ENCODE measurements at regions of chr3 and their contacts with region 1.

Region 1: DNA sequence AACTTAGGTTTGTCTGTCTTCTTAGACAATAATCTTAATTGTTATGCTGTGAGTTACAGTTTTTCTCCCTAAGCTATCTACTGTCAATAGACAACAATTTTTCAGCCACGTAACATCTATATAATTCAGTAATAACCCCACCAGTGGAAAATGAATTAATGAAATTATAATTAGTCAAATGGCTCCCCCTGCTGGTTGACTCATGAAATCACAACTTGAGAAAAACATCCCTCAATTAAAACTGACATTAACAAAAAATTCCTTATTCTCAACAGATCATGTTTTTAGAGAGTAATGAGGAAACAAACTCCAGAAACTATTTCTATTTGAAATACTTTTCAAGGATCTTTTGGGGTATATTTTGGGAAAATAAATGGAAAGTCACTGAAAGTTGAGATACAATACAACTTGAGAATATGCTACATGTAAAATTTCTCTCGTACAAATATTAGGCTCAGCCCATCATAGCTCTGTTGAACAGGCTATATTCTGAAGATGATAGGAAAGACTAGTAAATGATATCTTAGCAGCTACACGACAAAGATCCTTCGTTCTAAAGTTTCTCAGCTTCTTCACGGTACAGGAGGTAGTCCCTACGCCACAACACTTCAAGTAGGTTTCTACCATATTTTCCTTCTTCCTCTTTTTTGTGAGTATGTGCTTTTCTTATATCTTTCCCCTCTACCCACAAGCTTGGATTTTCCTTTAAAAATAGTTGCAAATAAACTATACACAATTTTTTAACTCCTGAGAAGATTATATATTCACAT is 20.7 kb downstream of the PPP1R2 start:
- DNase-seq: no peak
- ATAC-seq: no peak
- H3K4me3 ChIP-seq: no peak overlapping the region
- H3K27ac ChIP-seq: no peak overlapping the region
- H3K4me1 ChIP-seq: no peaks in the 10 kb centered on the region
- H3K27me3 ChIP-seq: no peaks in the 10 kb centered on the region
- CTCF ChIP-seq: peak; percentile 60
- EP300 ChIP-seq: no peak
- POLR2A ChIP-seq: no peak
- RAD21 ChIP-seq: peak; percentile 33; the same call in 1 of the 2 replicates

Region 2: DNA sequence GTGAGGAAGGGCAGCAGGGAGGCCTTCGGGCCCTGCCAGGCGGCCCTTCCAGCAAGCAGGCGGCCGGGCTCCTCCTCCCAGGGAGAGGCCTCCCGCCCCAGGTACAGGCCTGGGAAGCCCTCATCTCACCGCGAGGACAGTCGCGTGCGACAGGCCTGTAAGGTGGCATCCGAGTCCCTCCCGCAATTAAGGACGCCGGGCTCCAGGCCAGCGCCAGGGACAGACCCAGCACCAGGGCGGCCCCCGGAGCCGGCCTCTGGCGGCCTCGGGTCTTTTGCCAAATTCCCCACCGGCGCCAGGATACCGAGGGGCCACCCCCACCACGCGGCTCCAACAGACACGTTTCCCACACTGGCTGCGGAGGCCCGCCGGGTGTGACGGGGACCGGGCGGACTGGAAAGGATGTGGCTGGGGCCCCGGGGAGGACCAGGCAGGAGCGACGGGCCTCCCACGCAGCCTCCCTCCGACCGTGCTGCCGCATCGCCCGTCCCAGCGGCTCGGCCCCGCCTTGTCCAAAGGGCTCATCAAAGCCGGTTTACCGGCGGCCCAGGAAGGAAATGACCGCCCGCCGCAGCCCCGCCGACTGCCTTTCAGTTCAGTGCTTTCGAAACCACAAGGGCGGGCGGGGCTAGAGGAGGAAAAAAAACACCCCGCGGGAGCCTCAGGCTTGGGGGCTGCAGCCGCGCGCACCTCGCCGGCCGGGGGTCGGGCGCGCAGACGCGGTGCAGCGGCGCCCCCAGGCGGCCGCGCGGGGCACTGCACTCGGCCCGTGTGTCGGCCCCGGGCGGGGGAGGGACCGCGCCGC is 262.8 kb before region 1 on chr3:
- CTCF ChIA-PET with region 1: no interaction called
- POLR2A ChIA-PET with region 1: no interaction called
- in situ Hi-C with region 1: no loop called
- intact Hi-C with region 1: no loop called
- DNase-seq: peak; percentile 92
- ATAC-seq: peak; percentile 87
- H3K4me3 ChIP-seq: peak overlapping the region; percentile 56 to 77 (median 56); a peak in 5 of 6 replicates
- H3K27ac ChIP-seq: peak overlapping the region; percentile 92
- H3K4me1 ChIP-seq: peaks cover 38% of the 10 kb centered on the region
- H3K27me3 ChIP-seq: no peaks in the 10 kb centered on the region
- CTCF ChIP-seq: peak; percentile 51; the same call in 1 of the 2 replicates
- EP300 ChIP-seq: peak in 1 of 2 experiments; percentile 67; a peak in 1 of 4 replicates
- POLR2A ChIP-seq: peak in 1 of 2 experiments; percentile 62; a peak in 1 of 4 replicates
- RAD21 ChIP-seq: peak; percentile 99

Region 3: DNA sequence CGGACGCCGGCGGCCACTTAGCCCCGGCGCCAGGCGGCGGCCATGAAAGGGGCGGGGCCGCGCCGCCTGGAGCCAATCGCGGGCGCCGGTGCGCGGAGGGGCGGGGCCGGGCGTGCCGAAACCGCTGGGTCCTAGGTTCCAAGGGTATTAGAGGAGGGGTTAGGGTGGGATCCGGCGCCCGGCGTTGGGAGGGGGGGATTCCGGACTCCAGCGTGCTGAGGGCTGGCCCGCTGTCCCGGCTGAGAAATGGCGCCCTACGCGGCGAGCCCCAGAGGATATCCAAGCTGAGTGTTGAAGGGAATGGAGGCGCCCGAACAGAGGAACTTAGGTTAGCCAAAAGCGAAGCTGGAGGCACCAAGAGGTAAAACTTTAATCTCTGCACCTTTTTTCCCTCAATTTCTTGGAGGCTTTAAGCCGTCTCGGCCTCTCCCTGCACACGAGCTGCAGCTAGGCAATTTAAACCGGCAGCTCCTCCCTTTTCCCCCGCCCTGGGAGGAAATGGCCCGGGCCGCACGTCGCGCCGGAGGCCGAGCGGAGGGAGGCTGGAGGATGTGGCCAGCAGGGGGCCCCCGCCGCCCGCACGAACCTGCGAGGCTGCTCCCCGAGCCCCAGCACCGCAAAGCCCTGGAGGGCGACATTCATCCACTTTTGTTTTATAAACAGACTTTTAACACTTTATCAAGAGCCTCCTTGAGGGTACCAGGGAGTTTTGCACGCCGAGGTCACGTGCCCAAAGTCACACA is 251.2 kb before region 1 on chr3 and contains the start of gene XXYLT1:
- CTCF ChIA-PET with region 1: interaction called, 55 read pairs
- POLR2A ChIA-PET with region 1: interaction called, 5 read pairs
- in situ Hi-C with region 1: no loop called
- intact Hi-C with region 1: loop called (anchors 1 kb)
- DNase-seq: peak; percentile 81
- ATAC-seq: peak; percentile 89
- H3K4me3 ChIP-seq: peak within 1 kb of the TSS; percentile 89 to 92 (median 91)
- H3K27ac ChIP-seq: peak within 1 kb of the TSS; percentile 85
- H3K4me1 ChIP-seq: peaks cover 60% of the 10 kb centered on the region
- H3K27me3 ChIP-seq: no peaks in the 10 kb centered on the region; a peak in 1 of 5 replicates
- CTCF ChIP-seq: peak; percentile 96
- EP300 ChIP-seq: no peak
- POLR2A ChIP-seq: peak; percentile 52 to 54; a peak in 2 of 4 replicates
- RAD21 ChIP-seq: peak; percentile 95
- total RNA-seq, gene XXYLT1: 10.8 and 19.0 TPM in 2 replicates

Region 4: GRCh38 chr3:195442573-195443390 is 79.7 kb before region 1 on chr3 and contains the start of gene ACAP2:
- CTCF ChIA-PET with region 1: no interaction called
- POLR2A ChIA-PET with region 1: no interaction called
- in situ Hi-C with region 1: no loop called
- intact Hi-C with region 1: loop called (anchors 10 kb)
- DNase-seq: peak; percentile 96
- ATAC-seq: peak; percentile 94
- H3K4me3 ChIP-seq: peak within 1 kb of the TSS; percentile 72 to 91 (median 79)
- H3K27ac ChIP-seq: peak within 1 kb of the TSS; percentile 89
- H3K4me1 ChIP-seq: peaks cover 50% of the 10 kb centered on the region
- H3K27me3 ChIP-seq: no peaks in the 10 kb centered on the region
- CTCF ChIP-seq: no peak
- EP300 ChIP-seq: no peak
- POLR2A ChIP-seq: peak; percentile 84 to 86
- RAD21 ChIP-seq: peak; percentile 48; the same call in 1 of the 2 replicates
- total RNA-seq, gene ACAP2: 23.9 and 32.2 TPM in 2 replicates

Region 5: GRCh38 chr3:195557322-195557721 is 34.9 kb after region 1 on chr3:
- CTCF ChIA-PET with region 1: no interaction called
- POLR2A ChIA-PET with region 1: no interaction called
- in situ Hi-C with region 1: no loop called
- intact Hi-C with region 1: loop called (anchors 1 kb)
- DNase-seq: peak; percentile 40
- ATAC-seq: peak; percentile 64
- H3K4me3 ChIP-seq: no peak overlapping the region; a peak in 1 of 6 replicates
- H3K27ac ChIP-seq: no peak overlapping the region
- H3K4me1 ChIP-seq: peaks cover 49% of the 10 kb centered on the region
- H3K27me3 ChIP-seq: 0 out of 5 replicates have a peak, but pooled peaks cover 0 to 2% of the 10 kb centered on the region in 2 experiments
- CTCF ChIP-seq: no peak
- EP300 ChIP-seq: no peak
- POLR2A ChIP-seq: no peak
- RAD21 ChIP-seq: no peak